ENCODE measurements at regions of chr15 and their contacts with region 1.

Region 1: DNA sequence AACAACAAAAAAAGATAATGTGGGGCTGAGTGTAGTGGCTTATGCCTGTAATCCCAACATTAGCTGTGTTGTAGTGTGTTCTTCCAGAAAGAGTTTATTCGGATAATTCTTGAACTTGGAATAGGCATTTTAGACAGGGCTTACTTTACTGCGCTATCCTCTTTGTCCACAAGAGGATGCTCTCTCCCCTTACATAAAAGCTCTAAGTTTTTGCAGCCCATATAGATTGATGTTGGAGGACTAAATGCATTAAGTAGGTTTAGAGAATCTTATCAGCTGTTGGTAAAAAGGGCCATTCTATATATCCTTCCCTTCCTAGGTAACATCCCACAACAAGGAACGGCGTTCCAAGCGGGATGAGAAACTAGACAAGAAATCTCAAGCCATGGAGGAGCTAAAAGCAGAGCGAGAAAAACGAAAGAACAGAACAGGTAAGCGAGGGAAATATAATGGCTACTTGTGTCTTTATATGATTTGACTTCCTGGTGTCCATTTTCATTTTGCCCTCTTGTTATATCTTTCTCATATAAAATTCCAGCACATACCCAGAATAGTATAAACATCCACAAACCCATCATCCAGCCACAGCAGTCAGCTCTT is 27.8 kb upstream of the ITPKA start:
- DNase-seq: peak; percentile 64
- H3K27ac ChIP-seq: no peak overlapping the region
- CTCF ChIP-seq: peak; percentile 99

Region 2: GRCh38 chr15:41269887-41270286 is 196.0 kb before region 1 on chr15:
- CTCF ChIA-PET with region 1: no interaction called
- POLR2A ChIA-PET with region 1: no interaction called
- DNase-seq: no peak
- H3K27ac ChIP-seq: no peak overlapping the region
- CTCF ChIP-seq: no peak

Region 3: GRCh38 chr15:41476416-41477048 is 10.6 kb after region 1 on chr15:
- CTCF ChIA-PET with region 1: interaction called, 18 read pairs
- POLR2A ChIA-PET with region 1: no interaction called
- DNase-seq: no peak
- H3K27ac ChIP-seq: peak overlapping the region; percentile 57; the same call in 1 of the 2 replicates
- CTCF ChIP-seq: no peak

Region 4: DNA sequence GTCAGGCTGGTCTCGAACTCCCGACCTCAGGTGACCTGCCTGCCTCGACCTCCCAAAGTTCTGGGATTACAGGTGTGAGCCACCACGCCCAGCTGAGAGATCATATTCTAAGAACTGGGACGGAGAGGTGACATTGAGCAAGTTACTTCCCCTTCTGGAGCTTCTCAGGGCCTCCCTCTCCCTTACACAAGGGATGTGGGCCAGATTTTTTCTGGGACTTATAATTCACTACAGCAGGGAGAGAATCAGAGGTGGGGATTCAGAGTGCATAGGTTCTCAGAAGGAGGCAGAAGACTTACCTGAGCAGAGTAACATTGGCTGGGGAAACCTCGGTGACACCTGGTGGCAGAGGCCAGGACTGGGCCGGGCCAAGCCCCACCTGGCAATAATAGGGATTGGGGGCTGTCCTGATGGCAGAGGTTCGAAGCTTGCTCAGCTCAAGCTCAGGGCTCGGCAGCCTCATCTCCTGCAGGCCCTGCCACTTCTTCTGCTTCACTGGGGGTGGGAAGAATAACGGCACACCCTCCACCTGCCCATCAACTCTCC is 40.9 kb after region 1 on chr15:
- CTCF ChIA-PET with region 1: interaction called, 17 read pairs
- POLR2A ChIA-PET with region 1: no interaction called
- DNase-seq: no peak
- H3K27ac ChIP-seq: no peak overlapping the region
- CTCF ChIP-seq: no peak

Region 5: DNA sequence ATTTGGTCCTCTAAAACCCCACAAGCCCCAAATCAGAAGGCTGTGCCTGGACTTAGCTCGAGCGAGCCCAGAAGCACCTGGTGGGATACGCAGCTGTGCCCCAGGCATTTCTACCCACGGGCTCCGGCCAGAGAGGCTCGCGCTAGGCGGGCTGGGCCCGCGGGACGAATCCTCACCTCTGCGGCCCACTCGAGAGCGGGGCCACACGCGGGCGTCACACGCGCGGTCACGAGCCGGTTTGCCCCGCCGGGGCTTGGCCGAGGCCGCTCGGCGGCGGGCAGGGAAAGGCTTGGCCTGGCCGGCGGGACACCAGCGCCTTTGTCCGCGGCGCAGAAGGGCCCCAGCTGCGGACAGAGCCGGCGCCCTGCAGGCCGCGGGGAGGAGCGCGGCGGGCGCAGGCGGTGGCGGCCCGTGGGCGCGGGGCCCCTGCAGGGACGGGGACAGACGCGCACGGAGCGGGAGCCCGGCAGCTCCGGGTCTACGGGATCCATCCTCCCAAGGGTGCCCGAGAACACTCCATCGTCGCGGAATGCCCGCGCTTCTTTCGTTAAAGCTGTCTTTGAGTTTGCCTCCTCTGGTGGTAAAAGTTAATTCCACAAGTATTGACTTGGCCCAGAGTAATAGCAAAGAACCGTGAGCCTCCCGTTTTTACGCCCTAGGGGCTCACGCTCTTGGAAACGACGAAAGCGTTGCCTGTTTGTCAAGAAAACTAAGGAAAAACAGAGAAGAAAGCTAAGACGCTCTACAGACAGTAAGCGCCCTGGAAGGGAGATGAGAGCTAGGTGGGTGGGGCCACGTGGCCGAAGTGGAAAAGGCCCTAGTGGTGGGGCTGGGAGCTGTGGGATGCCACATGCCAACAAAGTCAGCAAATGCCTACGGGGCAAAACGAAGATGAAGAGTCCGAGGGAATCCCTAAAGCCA is 119.5 kb after region 1 on chr15:
- CTCF ChIA-PET with region 1: interaction called, 10 read pairs
- POLR2A ChIA-PET with region 1: no interaction called
- DNase-seq: peak; percentile 53
- H3K27ac ChIP-seq: peak overlapping the region; percentile 39
- CTCF ChIP-seq: peak; percentile 67